WTC11 (cell line): ENCODE measurements at regions of chr20 and their contacts with region 1.

Region 1: DNA sequence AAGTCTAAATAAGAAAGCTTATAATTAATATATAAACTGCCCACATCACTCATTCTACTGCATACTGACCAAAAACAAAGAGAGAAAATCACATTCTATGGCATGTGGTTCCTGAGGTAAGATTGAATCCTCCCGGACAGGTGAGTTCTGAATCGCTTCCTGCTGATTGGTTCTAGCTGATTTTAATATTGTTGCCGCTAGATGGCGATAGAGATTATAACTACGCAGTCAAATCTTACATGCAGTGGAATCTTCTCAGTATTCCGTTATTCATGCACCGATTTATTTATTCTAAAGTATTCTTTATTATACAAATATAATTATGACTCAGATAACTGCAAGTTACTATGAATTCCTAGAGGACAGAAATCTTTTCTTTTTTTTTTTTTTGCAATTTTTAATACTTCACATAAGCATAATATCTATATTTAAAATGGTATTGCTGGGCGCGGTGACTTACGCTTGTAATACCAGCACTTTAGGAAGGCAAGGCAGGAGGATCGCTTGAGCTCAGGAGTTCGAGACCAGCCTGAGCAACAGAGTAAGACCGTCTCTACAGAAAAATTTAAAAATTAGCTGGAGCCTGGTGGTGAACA is 24.2 kb upstream of the TMX4 start:
- DNase-seq: no peak
- ATAC-seq: peak; percentile 76
- H3K4me3 Mint-ChIP-seq: no peak overlapping the region
- H3K27ac Mint-ChIP-seq: no peak overlapping the region
- H3K4me1 Mint-ChIP-seq: no peaks in the 10 kb centered on the region
- H3K27me3 Mint-ChIP-seq: no peaks in the 10 kb centered on the region; the same call in 1 of the 2 replicates
- CTCF ChIP-seq: peak; percentile 54

Region 2: DNA sequence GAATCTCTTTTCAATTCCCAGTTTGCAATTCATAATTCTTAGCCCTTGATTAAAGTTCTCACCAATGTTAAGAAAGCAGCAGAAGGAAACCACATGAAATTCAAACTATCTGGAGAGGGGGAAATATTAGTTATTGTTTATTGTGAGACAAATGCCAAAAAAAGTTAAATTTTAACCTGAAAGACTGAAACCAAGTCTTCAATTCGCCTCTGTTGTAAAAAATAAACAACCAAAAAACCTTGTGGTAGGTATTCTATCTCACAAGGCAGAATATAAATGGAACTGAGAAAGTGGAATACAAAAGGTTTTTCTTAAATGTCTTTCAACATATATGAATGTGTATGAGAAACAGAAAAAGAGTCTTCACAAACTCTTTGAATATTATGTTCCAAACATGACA is 49.0 kb before region 1 on chr20:
- CTCF ChIA-PET with region 1: no interaction called
- POLR2A ChIA-PET with region 1: no interaction called
- DNase-seq: no peak
- ATAC-seq: no peak
- H3K4me3 Mint-ChIP-seq: no peak overlapping the region
- H3K27ac Mint-ChIP-seq: no peak overlapping the region
- H3K4me1 Mint-ChIP-seq: no peaks in the 10 kb centered on the region
- H3K27me3 Mint-ChIP-seq: no peaks in the 10 kb centered on the region
- CTCF ChIP-seq: no peak

Region 3: DNA sequence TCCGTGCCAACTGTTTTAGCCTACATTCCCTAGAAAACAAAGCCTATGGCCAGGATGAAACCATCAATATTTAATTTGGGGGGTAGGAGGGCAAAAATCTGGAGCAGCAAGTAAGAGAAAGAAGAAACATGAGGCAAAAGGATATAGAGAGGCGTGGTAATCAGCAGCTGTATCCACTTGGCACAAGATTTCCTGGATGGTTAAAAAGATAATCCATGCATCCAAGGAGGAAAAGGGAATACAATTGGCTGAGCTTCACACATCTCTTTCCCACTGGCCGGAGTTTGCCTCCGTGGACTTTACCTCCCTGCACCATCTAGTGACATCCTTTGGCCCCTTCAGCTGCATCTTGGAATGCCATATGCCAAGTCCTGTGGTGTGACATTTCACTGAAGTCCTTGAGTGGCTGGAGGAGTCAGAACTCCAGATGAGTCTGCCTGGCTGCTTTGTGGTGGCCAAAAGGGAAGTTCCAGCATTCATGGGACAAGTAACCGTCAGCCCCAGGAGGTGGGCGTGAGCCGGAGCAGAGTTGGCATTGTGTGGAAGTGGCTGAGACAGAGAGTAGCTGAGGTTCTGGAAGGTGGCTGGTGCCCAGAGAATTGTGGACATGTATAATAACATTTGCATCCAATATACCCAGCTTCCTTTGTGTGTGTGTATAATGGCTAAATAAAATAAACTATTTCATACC is 10.5 kb before region 1 on chr20:
- CTCF ChIA-PET with region 1: interaction called, 11 read pairs
- POLR2A ChIA-PET with region 1: no interaction called
- DNase-seq: no peak
- ATAC-seq: no peak
- H3K4me3 Mint-ChIP-seq: no peak overlapping the region
- H3K27ac Mint-ChIP-seq: no peak overlapping the region
- H3K4me1 Mint-ChIP-seq: no peaks in the 10 kb centered on the region
- H3K27me3 Mint-ChIP-seq: peaks cover 4% of the 10 kb centered on the region; the same call in 1 of the 2 replicates
- CTCF ChIP-seq: no peak

Region 4: GRCh38 chr20:8094415-8094818 is 50.6 kb after region 1 on chr20:
- CTCF ChIA-PET with region 1: no interaction called
- POLR2A ChIA-PET with region 1: no interaction called
- DNase-seq: no peak
- ATAC-seq: no peak
- H3K4me3 Mint-ChIP-seq: no peak overlapping the region
- H3K27ac Mint-ChIP-seq: no peak overlapping the region
- H3K4me1 Mint-ChIP-seq: peaks cover 6% of the 10 kb centered on the region; the same call in 1 of the 2 replicates
- H3K27me3 Mint-ChIP-seq: peaks cover 5% of the 10 kb centered on the region; the same call in 1 of the 2 replicates
- CTCF ChIP-seq: no peak